ENCODE measurements at regions of chr7 and their contacts with region 1.

Region 1: GRCh38 chr7:16636555-16637101 is 8.9 kb downstream of the ANKMY2 start:
- DNase-seq: no peak
- ATAC-seq: no peak

Region 2: GRCh38 chr7:16670021-16670420 is 33.4 kb after region 1 on chr7:
- intact Hi-C with region 1: loop called (anchors 5 kb)
- DNase-seq: no peak
- ATAC-seq: no peak